Gastrocnemius medialis (tissue), 4 donors: ENCODE measurements at regions of chr10 and their contacts with region 1.

Region 1: DNA sequence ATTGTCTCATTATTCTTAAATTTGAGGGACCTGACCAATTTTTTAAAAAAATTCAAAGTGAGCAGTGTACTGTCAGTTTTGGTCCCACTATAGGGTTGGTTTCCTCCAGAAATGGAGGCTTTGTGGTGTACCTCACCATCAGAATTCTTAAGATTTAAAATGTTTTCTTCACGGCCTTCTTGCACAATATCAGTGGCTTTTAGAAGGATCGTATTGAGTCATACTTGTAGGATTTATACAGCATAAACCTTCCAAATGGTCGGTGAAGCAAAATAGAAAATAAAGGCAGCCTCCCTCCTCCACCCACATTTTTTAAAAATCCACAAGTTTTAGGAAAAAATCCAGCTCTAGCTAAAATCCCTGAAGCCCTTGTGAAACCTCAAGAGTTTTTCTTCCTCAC is 126.4 kb downstream of the RNLS start:
- DNase-seq: no peak
- ATAC-seq: no peak
- H3K4me3 ChIP-seq: no peak overlapping the region
- H3K27ac ChIP-seq: peak overlapping the region; percentile 35 to 67 (median 54)
- H3K4me1 ChIP-seq: peaks cover 15 to 38% of the 10 kb centered on the region in 2 donors
- H3K27me3 ChIP-seq: no peaks in the 10 kb centered on the region
- CTCF ChIP-seq: no peak
- POLR2A ChIP-seq: no peak

Region 2: DNA sequence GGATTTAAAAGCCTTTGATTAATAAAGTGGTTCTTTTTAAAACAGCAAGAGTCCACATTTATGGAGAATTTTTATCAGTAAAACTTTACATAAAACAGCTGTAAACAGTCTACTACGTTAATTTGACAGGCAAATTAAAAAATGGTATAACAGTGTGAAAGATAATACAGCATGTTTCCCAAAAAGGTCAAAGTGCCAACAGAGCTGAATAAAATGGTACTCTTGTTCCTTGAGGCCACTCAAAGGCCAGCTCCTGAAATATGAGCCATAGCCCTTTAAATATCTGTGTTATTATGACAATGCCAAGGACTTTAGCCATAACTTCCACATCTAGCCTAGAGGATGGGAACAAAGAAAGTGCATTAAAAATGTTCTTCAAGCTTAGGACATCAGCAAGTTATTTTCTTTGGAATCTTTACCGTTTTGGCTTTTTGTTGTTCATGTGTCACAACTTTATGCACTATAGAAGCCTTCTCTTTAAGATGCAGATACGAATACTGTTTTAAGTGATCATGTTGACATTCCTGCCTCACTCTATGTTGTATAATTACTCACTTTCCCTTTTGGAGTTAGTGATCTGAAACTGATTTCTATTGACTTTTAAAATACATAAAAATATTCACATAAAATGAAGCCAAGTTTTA is 39.2 kb before region 1 on chr10:
- in situ Hi-C with region 1: no loop called
- intact Hi-C with region 1: loop called (anchors 5 kb)
- DNase-seq: no peak
- ATAC-seq: no peak
- H3K4me3 ChIP-seq: no peak overlapping the region
- H3K27ac ChIP-seq: peak overlapping the region; percentile 15 to 84 (median 80)
- H3K4me1 ChIP-seq: peaks cover 29 to 41% of the 10 kb centered on the region in 2 donors
- H3K27me3 ChIP-seq: no peaks in the 10 kb centered on the region
- CTCF ChIP-seq: no peak
- POLR2A ChIP-seq: no peak

Region 3: DNA sequence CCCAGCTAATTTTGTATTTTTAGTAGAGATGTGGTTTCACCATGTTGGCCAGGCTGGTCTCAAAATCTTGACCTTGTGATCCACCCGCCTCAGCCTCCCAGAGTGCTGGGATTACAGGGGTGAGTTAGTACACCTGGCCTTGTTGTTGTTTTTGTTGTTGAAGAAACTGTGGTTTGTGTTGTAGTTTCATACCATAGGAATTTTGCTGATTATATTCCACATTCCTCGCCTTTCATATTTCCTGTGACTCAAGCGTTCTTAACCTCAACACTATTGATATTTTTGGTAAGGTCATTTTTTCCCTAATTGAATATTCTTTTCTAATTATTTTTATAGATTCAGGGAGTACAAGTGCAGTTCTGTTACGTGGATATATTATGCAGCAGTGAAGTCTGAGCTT is 224.2 kb after region 1 on chr10:
- in situ Hi-C with region 1: no loop called
- intact Hi-C with region 1: no loop called
- DNase-seq: no peak
- ATAC-seq: no peak
- H3K4me3 ChIP-seq: no peak overlapping the region
- H3K27ac ChIP-seq: no peak overlapping the region
- H3K4me1 ChIP-seq: no peaks in the 10 kb centered on the region
- H3K27me3 ChIP-seq: no peaks in the 10 kb centered on the region
- CTCF ChIP-seq: no peak
- POLR2A ChIP-seq: no peak